CD4-positive, alpha-beta memory T cell (primary cell): ENCODE measurements at regions of chr6 and their contacts with region 1.

Region 1: DNA sequence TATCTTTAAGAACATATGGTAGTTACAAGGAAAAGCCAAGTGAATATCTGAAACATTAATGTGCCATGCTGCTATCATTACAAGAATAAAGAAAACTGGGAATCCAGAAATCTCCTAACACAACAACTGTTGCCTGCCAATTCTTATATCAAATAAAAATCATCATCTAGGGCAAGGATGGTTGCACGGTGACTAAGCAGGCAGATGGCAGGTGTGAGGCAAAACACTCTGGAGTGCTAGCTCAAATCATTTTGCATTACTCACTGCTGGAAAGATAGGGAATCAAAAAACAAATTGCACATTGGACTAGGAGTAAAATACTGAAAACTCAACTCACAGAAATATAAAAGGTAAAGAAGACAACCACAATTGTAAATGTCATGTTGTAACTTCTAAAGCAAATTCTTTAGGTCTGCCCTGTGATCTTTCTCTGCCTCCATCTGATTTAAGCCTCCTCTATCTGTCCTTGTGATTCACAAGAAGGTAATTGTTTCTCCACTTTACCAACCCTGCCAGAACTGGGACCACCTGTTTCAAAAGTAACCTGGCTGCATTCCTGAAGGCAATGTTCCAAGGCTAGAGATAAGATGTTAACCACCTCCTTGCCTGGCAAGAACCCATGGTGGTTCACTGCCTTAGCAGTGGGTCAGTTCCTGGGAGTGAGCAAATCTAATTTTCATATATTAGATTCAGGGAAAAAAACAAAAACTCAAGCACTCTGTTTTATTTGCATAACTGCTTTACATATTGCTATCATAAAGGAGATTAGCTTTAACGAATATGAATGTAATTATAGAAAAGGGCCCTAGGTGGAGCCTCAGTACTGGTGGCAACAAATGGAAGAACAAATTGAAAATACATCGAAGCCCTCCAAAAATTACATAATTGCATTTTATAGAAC is 33.1 kb upstream of the LCA5 start:
- DNase-seq: peak in 4 of 5 donors; percentile 9 to 26 (median 16)
- H3K4me3 ChIP-seq: no peak overlapping the region
- H3K4me3 Mint-ChIP-seq: peak overlapping the region in 1 of 8 donors; percentile 2
- H3K27ac ChIP-seq: no peak overlapping the region
- H3K27ac Mint-ChIP-seq: no peak overlapping the region
- H3K4me1 ChIP-seq: no peaks in the 10 kb centered on the region
- H3K4me1 Mint-ChIP-seq: no peaks in the 10 kb centered on the region
- H3K27me3 ChIP-seq: no peaks in the 10 kb centered on the region
- H3K27me3 Mint-ChIP-seq: peaks cover 1 to 3% of the 10 kb centered on the region in 2 donors

Region 2: GRCh38 chr6:79672631-79673111 is 102.3 kb after region 1 on chr6:
- CTCF ChIA-PET with region 1: interaction called, 26 read pairs
- POLR2A ChIA-PET with region 1: no interaction called
- intact Hi-C with region 1: loop called (anchors 1 kb)
- DNase-seq: no peak
- H3K4me3 ChIP-seq: no peak overlapping the region
- H3K4me3 Mint-ChIP-seq: no peak overlapping the region
- H3K27ac ChIP-seq: no peak overlapping the region
- H3K27ac Mint-ChIP-seq: peak overlapping the region in 2 of 7 donors; percentile 6 to 11
- H3K4me1 ChIP-seq: peaks cover 25% of the 10 kb centered on the region
- H3K4me1 Mint-ChIP-seq: peaks cover 12 to 27% (median 18%) of the 10 kb centered on the region in 4 donors
- H3K27me3 ChIP-seq: no peaks in the 10 kb centered on the region
- H3K27me3 Mint-ChIP-seq: no peaks in the 10 kb centered on the region

Region 3: DNA sequence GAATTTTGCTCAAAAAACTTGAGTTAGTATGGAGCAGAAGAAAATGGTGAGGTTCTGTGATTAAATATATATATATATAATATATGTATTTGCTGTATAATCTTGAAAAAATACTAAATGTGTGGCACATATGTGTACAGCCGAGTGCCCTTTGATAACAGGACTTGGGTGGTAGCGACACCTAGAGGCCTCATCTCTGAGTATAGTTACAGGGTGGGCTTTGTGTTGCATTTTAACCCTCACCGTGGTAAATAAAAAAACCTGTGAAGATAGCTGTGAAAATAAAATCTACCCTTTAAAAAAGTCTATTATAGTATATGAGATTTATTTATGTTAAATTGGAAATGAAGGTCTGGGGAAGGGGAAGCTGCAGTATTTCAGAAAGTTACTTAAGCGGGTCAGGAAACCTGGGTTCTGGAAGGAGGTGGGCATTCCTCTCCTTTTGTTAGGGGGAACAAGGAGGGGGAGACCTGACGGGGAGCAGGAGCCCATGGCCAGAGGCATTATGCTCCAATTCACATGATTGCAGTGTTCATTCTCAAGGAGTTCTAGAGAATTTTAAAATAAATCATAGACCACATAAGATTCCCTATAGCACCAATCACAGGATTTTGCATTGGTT is 143.4 kb after region 1 on chr6:
- CTCF ChIA-PET with region 1: interaction called, 18 read pairs
- POLR2A ChIA-PET with region 1: no interaction called
- intact Hi-C with region 1: loop called (anchors 1 kb)
- DNase-seq: peak in 4 of 5 donors; percentile 4 to 27 (median 12)
- H3K4me3 ChIP-seq: no peak overlapping the region
- H3K4me3 Mint-ChIP-seq: no peak overlapping the region
- H3K27ac ChIP-seq: no peak overlapping the region
- H3K27ac Mint-ChIP-seq: peak overlapping the region in 1 of 7 donors; percentile 5
- H3K4me1 ChIP-seq: no peaks in the 10 kb centered on the region
- H3K4me1 Mint-ChIP-seq: no peaks in the 10 kb centered on the region
- H3K27me3 ChIP-seq: no peaks in the 10 kb centered on the region
- H3K27me3 Mint-ChIP-seq: peaks cover 2 to 3% of the 10 kb centered on the region in 2 donors